GM13977 (cell line): ENCODE measurements at regions of chr12 and their contacts with region 1.

Region 1: GRCh38 chr12:29317556-29318363 is 63.2 kb downstream of the ERGIC2 start:
- DNase-seq: peak; percentile 68
- CTCF ChIP-seq: peak; percentile 95

Region 2: DNA sequence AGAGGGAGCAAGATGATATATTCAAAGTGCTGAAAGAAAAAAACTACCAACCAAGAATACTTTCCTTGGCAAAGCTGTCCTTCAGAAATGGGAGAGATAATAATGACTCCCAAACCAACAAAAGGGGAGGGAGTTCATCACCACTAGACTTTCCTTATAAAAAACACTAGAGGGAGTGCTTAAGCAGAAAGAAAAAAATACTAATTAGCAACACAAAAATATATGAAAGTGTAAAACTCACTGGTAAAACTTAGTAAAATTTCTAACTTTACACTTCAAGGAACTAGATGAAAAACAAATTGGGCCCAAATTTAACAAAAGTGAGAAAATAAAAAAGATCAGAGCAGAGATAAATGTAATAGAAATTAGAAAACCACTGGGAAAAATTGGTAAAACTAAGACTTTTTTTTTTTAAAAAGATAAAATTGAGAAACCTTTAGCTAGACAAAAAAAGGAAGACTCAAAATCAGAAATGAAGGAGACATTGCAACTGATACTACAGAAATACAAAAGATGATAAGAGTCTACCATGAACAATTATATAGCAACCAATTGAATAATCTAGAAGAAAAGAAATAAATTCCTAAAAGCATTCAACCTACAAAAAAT is 229.0 kb before region 1 on chr12:
- in situ Hi-C with region 1: loop called (anchors 10 kb)
- DNase-seq: peak; percentile 17
- CTCF ChIP-seq: peak; percentile 35

Region 3: GRCh38 chr12:29176941-29177340 is 140.8 kb before region 1 on chr12:
- in situ Hi-C with region 1: no loop called
- DNase-seq: no peak
- CTCF ChIP-seq: no peak